ENCODE measurements at regions of chr11 and their contacts with region 1.

Region 1: DNA sequence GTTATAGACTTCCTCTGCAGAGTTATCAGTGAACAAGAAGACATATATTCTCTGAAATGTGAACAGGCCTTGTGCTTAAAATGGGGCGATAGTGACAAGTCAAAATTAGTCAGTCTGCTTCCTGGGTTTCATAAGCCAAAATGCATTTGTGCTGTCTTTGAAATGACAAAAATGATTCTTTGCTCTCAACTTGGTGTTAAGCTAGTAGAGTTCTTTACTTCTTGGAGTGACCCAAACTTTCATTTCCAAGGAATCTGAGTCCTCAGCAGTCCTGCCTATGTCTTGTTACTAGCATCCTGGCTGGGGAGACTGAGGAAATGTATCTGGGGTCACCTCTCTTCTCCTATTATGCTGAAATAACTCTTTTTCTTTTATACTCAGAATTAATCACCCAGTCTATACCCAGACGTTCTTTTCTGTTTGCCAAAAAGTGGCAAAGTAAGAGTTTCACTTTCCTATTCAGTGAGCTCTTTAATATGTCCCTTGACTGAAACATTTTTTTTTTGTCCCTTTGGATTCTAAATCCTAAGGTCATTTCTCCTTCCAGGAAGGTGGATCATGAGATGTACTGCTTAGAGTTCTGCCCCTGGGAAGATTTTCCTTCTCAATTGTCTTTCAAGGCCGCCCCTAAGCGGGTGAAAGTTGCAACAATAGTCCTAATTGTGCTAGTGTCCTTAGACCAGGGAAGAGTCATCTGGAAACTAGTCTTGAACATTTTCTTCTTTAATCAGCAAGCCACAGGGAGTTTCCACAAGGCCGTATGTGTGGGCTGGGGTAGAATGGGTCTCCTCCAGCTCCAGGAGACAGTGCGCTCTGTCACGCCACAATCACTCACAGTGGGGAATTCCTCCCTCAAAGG is 53.0 kb upstream of the RDX start:
- DNase-seq: peak; percentile 94
- ATAC-seq: peak; percentile 79
- H3K4me3 Mint-ChIP-seq: peak overlapping the region; percentile 58
- H3K27ac Mint-ChIP-seq: peak overlapping the region; percentile 99
- H3K4me1 Mint-ChIP-seq: peaks cover 59% of the 10 kb centered on the region
- H3K27me3 Mint-ChIP-seq: no peaks in the 10 kb centered on the region
- CTCF ChIP-seq: no peak

Region 2: DNA sequence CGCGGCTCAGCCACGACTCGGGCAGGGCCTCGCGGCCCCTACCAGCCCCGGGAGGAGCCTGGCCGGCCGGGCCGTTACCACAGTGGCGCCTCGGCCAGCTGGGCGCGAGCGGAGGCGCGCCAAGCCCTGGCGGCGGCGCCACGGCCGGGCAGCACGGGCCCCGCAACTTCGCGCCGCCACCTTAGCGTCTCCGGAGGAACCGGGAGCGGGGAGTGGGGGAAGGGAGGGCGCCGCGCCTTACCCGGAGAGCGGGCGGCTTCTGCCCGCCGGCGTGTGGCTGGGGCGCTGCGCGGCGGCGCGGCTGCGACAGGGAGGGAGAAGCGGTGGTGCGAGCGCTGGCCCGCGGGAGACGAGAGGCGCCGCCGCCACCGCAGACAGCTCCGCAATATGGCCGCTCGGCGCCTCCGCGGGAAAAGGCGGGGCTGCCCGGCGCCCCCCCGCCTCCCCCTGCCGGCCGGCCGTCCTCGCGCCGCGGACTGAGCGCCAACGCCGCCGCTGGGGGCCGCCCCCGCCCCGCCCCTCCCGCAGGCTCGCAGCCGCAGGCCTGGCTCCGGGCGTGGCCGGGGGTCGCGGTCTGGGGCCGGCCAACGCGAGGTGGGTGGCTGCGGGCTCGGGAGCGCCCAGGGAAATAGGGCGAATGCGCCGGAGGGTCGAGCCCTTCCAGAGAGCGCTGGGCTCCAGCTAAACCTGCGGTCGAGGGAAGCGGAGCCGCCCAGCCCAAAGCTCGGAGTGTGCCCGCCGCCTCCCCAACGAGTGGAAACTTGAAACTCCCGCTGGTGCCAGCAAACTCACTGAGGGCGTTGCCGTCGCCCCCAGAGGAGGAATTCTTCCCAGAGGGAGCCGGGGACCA is 52.9 kb before region 1 on chr11 and contains the start of gene RDX:
- CTCF ChIA-PET with region 1: interaction called, 5 read pairs
- POLR2A ChIA-PET with region 1: interaction called, 6 read pairs
- intact Hi-C with region 1: loop called (anchors 5 kb)
- DNase-seq: peak; percentile 55
- ATAC-seq: peak; percentile 72
- H3K4me3 Mint-ChIP-seq: peak within 1 kb of the TSS; percentile 82
- H3K27ac Mint-ChIP-seq: peak within 1 kb of the TSS; percentile 87
- H3K4me1 Mint-ChIP-seq: peaks cover 37% of the 10 kb centered on the region
- H3K27me3 Mint-ChIP-seq: no peaks in the 10 kb centered on the region
- CTCF ChIP-seq: no peak
- total RNA-seq, gene RDX: 37.8 to 41.2 TPM

Region 3: GRCh38 chr11:110311783-110312579 is 37.4 kb before region 1 on chr11:
- CTCF ChIA-PET with region 1: interaction called, 4 read pairs
- POLR2A ChIA-PET with region 1: interaction called, 5 read pairs
- intact Hi-C with region 1: loop called (anchors 5 kb)
- DNase-seq: peak; percentile 34
- ATAC-seq: peak; percentile 89
- H3K4me3 Mint-ChIP-seq: no peak overlapping the region
- H3K27ac Mint-ChIP-seq: peak overlapping the region; percentile 92
- H3K4me1 Mint-ChIP-seq: peaks cover 18% of the 10 kb centered on the region
- H3K27me3 Mint-ChIP-seq: no peaks in the 10 kb centered on the region
- CTCF ChIP-seq: no peak

Region 4: DNA sequence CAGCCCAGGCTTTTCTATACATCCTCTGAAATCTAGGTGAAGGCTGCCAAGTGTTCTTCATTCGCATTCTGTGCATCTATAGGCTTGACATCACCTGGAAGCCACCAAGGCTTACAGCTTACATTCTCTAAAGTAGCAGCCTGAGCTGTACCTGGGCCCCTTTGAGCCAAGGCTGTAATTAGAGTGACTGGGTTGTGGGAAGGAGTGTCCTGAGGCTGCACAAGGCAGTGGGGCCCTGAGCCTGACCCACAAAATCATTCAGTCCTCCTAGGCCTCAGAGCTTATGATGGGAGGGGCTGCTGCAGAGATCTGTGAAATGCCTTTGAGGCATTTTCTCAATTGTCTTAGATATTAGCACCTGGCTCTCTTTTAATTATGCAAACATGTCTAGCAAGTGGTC is 19.9 kb before region 1 on chr11:
- CTCF ChIA-PET with region 1: interaction called, 6 read pairs
- POLR2A ChIA-PET with region 1: interaction called, 13 read pairs
- intact Hi-C with region 1: loop called (anchors 2 kb)
- DNase-seq: no peak
- ATAC-seq: no peak
- H3K4me3 Mint-ChIP-seq: peak overlapping the region; percentile 77
- H3K27ac Mint-ChIP-seq: peak overlapping the region; percentile 90
- H3K4me1 Mint-ChIP-seq: peaks cover 14% of the 10 kb centered on the region
- H3K27me3 Mint-ChIP-seq: peaks cover 2% of the 10 kb centered on the region
- CTCF ChIP-seq: no peak

Measured in activated CD8-positive, alpha-beta T cell treated with anti-CD3 and anti-CD28 coated beads for 36 hours (primary cell).